Right ventricle myocardium inferior (tissue), 1 donor: ENCODE measurements at regions of chr11 and their contacts with region 1.

Region 1: DNA sequence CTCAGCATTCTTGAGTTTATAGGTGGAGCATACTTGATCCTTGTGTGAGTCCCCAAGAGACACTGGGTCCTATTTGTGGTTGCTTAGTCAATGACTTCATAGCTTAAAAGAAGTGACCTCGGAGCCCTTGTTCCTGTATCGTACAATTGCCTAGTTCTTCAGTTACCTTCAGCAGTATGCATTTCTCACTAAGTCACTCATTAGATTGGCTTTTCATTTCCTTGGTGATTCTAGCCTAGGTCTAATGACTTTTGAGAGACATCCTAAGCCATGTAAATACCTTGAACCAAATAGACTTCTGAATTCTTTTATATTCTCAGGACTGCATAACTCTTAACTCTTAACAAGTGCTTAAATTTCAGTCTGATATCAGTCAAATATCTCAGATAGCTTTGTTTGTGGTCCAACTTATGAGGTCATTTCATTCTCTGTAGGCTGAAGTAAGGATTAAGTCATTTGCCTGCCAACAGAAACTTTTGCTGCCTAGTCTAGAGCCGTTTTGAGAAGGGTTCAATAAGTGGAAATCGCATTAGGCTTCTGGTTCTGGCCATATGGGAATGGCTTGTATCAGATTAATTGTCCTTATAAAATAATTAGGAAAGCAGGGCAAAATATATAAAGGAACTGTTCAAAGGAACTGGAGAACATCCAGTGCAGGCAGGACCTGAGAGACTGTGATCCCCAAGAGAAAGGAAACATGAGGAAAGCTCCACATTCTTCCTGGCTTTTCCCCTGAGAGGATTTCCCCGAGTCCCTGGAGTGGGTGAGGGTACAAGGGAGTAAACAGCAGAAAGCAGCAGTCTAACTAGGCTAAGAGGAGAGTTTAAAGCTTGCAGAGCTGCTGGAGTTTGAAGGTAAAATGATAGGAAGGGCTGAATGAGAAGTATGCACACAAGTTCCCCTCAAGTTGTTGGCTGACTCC is 39.9 kb downstream of the TRAF6 start:
- DNase-seq: no peak
- ATAC-seq: no peak

Region 2: GRCh38 chr11:36361901-36362391 is 108.2 kb before region 1 on chr11:
- intact Hi-C with region 1: no loop called
- DNase-seq: no peak
- ATAC-seq: no peak

Region 3: DNA sequence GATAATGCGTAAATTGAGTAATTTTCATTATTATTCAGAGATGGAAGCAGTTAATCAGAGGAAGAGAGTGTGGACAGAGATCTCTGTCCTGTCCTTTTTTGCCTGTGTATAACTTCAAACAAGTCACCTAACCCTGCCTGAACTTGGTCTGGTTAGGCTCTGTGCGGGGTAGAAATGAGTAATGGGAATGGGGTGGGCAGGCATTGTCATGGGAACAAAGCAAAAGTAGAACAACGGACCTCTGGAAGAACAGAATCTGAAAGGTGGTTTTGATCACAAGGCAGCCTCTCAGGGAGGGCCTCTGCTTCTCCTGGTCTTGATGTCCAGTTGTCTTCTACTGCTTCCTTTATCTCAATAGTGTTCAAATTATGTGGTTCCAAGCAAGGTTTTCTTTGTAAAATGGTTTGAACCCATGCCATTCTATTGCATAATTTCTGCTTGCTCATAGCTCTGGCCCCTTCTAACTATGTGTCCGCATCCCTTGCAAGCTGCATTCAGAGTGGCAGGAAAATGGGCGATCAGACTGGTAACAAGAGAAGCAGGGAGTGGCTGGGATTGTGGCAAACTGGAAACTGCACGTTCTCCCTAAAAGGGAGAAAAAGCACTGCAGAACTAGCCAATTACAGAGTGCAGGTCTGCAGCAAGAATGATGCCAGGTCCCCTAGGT is 97.9 kb before region 1 on chr11:
- intact Hi-C with region 1: loop called (anchors 5 kb)
- DNase-seq: no peak
- ATAC-seq: peak; percentile 34

Region 4: DNA sequence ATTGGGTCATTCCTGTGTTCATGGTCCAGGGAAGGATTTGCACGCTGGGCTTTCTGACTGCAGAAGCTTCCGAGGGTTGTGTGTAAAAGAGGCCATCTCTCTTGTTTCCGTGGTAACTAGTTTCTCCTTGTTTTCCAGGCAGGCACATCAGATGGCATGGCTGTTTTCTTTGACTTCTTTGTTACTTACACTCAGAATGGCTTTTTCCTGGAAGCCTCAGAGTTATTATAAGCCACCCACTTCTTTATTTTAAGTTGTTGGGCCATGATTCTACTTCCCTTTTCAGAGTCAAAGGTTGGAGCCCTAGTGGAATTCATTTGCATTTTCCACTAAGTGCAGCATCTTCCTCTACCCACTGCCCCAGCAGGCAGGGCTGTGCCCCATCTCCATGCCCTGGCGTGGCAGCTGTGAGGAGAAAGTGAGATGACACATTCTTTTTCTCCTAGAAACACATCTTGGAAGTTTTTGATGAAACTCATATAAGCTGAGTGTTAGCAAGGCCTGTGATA is 79.1 kb before region 1 on chr11:
- intact Hi-C with region 1: no loop called
- DNase-seq: no peak
- ATAC-seq: peak; percentile 46

Region 5: GRCh38 chr11:36412781-36413383 is 57.3 kb before region 1 on chr11:
- intact Hi-C with region 1: no loop called
- DNase-seq: no peak
- ATAC-seq: no peak

Region 6: DNA sequence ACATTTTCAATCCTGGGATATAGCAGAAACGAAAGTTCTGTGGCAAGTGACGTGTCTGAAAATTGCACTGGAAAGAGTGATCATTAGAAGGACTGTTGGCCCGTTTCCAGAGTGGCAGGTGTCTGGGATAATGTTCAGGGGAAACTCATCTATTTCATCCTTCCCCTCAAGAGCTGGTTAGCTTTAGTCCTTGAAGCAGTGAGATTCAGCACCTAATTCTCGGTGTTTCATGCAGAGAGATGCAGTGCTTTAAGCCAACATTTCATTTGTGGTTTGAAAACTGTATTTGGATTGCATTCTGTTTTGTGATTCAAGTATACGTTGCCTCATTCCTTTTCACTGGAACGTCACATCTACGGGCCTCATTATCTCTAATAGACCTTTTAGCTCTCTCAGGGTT is 332.9 kb after region 1 on chr11:
- intact Hi-C with region 1: no loop called
- DNase-seq: no peak
- ATAC-seq: no peak